MCF 10A (cell line): ENCODE measurements at regions of chr12 and their contacts with region 1.

Region 1: DNA sequence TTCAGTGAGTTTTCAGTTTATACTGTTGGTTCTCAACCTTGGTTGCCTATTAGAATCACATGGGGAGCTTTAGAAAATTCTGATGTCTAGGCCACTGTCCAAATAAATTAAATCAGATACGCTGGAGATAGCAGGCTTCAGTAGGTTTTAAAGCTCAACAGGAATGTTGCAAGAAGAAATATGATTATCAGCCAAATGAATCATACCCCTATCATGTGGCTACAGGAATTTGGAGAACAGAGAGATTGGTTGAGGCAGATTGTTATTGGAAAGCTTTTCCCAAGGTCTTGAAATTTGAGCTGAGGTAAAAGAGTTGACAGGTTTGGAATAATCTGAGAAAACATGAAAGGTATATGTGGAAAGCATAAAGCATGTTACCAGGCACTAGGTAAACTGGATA is 125.3 kb downstream of the WIF1 start:
- DNase-seq: peak; percentile 53
- H3K4me3 Mint-ChIP-seq: no peak overlapping the region
- H3K27ac Mint-ChIP-seq: no peak overlapping the region
- H3K4me1 Mint-ChIP-seq: peaks cover 7% of the 10 kb centered on the region
- H3K27me3 Mint-ChIP-seq: peaks cover 10% of the 10 kb centered on the region
- CTCF ChIP-seq: no peak

Region 2: DNA sequence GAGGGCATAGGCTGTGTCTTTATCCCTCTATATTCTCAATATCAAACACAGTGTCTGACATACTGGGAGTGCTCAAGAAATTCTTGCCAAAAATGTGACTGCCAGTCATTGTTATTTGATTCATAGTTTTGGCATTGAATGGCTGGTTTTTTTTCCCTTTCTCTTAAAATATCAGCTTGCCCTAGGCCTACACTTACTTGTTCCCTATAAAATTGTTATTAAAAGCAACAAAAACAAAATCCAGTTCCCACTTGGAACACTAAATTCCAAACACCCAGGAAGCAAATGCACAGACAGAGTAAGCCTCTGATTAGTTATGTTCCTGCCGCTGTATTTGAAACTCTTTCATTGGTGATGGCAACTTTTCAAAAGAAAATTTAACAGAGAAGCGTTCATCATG is 14.6 kb after region 1 on chr12:
- CTCF ChIA-PET with region 1: no interaction called
- POLR2A ChIA-PET with region 1: interaction called, 11 read pairs
- intact Hi-C with region 1: no loop called
- DNase-seq: no peak
- H3K4me3 Mint-ChIP-seq: no peak overlapping the region
- H3K27ac Mint-ChIP-seq: no peak overlapping the region
- H3K4me1 Mint-ChIP-seq: no peaks in the 10 kb centered on the region
- H3K27me3 Mint-ChIP-seq: peaks cover 18% of the 10 kb centered on the region
- CTCF ChIP-seq: no peak